ENCODE measurements at regions of chr7 and their contacts with region 1.

Region 1: DNA sequence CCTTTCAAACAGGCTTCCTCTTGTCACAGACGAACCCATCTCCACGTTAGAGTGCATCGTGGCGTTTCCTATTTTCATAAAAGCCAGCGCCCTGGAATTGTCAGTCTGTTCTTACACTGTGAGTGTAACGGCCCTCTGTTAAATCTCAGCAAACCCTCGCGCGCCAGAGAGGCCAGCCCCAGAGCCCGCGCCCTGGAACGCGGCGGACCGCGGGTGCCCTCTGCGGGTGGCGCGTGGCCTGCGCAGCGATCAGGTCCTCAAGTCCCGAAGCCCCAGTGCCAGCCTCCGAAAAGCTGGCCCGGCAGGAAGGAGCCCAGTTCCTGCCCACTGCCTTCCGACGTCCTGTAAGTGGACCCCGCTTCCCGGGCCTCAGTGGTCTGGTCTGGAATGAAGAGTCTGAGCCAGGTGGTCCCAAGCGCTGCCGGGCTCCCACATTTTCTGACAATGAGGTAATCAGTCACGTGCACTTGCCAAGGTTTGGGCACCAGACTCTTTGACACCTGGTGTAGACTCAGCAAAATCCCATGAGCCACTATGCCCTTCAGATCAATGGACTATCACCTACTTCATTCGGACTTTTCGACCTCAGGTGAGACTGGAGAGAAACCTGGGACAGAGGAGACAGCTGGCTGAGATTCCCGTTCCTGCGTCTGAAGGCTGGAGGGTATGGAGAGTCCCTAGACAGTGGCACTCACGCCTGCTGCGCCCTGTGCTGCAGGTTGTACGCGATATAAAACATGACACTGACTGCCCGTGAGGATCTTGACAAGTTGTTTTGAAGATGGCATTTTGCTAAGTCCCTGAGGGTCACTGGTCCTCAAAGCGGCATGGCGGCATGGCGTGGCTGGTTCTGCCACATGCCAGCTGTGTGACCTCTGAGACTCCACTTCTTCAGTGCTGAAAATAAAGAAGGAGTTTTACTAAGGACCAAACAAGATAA is 109.4 kb upstream of the LANCL2 start:
- DNase-seq: peak; percentile 20
- ATAC-seq: peak; percentile 96
- H3K4me3 ChIP-seq: peak overlapping the region; percentile 67; the same call in 1 of the 2 replicates
- H3K27ac ChIP-seq: no peak overlapping the region
- H3K4me1 ChIP-seq: peaks cover 4% of the 10 kb centered on the region; the same call in 1 of the 2 replicates
- H3K27me3 ChIP-seq: peaks cover 0 to 6% of the 10 kb centered on the region in 2 experiments; a peak in 3 of 4 replicates
- CTCF ChIP-seq: peak; percentile 88 to 92 (median 89)
- EP300 ChIP-seq: no peak
- POLR2A ChIP-seq: no peak
- RAD21 ChIP-seq: peak; percentile 86

Region 2: DNA sequence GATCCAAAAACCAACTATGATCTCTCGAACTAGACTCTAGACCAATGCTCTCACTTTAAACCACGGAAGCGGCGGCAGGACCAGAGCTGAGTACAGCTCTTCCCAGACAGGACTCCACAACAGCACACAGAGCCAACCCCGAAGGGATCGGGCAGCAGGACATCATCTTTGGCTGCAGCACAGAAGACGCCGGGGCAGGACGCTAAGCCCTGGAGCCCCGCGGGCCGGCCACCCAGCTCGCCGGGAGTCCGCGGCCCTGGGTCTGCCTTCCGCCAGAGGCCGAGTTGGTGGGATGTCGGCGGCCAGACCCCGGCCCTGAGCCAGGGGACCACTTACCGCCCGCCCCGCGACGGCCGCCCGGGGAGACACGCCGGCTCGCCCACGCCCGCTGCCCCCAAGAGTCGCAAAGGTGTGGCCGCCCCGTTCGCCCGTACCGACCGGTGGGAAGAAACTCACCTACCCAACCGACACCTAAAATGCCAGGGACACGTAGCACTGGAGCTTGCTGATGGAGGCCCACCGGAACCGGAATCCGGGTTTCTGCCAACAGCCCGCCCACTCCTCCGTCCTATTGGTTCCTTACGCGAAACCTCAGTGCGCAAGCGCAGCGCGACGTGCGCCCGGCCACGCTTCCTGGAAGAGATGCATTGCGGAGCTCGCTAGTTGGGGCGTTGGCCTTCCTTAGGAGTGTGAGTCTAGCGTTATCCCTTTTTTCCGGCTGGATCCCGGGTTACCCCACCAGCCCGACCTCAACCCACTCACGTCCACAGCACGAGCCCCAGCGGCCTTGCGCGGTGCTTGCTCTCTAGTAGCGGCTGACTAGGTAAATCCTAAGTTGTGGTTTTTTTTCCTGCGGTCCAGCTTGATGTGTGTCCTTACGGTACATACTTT is 496.8 kb before region 1 on chr7 and contains the start of gene SEC61G:
- CTCF ChIA-PET with region 1: interaction called, 19 read pairs
- POLR2A ChIA-PET with region 1: no interaction called
- RAD21 ChIA-PET with region 1: interaction called, 6 read pairs
- SMC1A ChIA-PET with region 1: interaction called, 9 read pairs
- in situ Hi-C with region 1: no loop called
- intact Hi-C with region 1: no loop called
- DNase-seq: peak; percentile 90
- ATAC-seq: peak; percentile 96
- H3K4me3 ChIP-seq: peak within 1 kb of the TSS; percentile 97
- H3K27ac ChIP-seq: peak within 1 kb of the TSS; percentile 78
- H3K4me1 ChIP-seq: no peaks in the 10 kb centered on the region
- H3K27me3 ChIP-seq: no peaks in the 10 kb centered on the region
- CTCF ChIP-seq: no peak
- EP300 ChIP-seq: no peak
- POLR2A ChIP-seq: peak; percentile 92
- RAD21 ChIP-seq: no peak
- polyA plus RNA-seq, gene SEC61G: 709 to 809 TPM

Region 3: GRCh38 chr7:54788664-54789063 is 467.1 kb before region 1 on chr7:
- CTCF ChIA-PET with region 1: interaction called, 82 read pairs
- POLR2A ChIA-PET with region 1: no interaction called
- RAD21 ChIA-PET with region 1: interaction called, 75 read pairs
- SMC1A ChIA-PET with region 1: interaction called, 41 read pairs
- in situ Hi-C with region 1: no loop called
- intact Hi-C with region 1: loop called (anchors 1 kb)
- DNase-seq: peak; percentile 13
- ATAC-seq: peak; percentile 85
- H3K4me3 ChIP-seq: no peak overlapping the region
- H3K27ac ChIP-seq: no peak overlapping the region
- H3K4me1 ChIP-seq: no peaks in the 10 kb centered on the region
- H3K27me3 ChIP-seq: peaks cover 0 to 3% of the 10 kb centered on the region in 2 experiments; a peak in 1 of 4 replicates
- CTCF ChIP-seq: peak; percentile 47 to 61 (median 55); a peak in 5 of 6 replicates
- EP300 ChIP-seq: no peak
- POLR2A ChIP-seq: no peak
- RAD21 ChIP-seq: peak; percentile 91

Region 4: DNA sequence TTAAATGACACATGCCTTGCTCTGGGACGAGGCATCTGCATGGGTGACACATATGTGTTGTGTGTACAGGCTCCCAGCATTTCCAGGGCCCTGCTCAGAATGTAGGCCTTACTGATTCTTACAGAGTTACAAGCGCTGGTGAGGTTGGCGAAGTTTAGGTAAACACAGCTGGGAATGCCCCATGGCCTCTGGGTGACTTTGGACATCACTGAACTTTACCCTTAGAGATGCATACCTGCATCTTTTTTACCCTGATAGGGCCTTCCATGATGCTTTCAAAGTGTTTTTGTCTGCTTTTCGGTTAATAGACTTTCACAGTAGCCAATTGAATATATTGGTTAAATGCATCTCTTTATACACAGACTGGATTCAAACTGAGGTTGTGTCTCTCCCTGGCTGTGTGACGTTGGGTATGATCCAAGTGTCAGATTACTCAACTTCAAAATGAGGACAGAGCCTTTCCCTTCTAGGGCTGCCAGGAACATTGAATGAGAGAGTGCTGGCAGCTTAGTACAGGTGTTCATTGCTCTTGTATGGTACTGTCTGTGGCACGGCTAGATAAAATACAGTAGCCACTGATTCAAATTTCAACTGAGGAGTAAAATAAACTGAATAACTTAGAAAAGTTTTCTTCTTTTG is 207.4 kb before region 1 on chr7:
- CTCF ChIA-PET with region 1: interaction called, 9 read pairs
- POLR2A ChIA-PET with region 1: no interaction called
- RAD21 ChIA-PET with region 1: interaction called, 28 read pairs
- SMC1A ChIA-PET with region 1: interaction called, 15 read pairs
- in situ Hi-C with region 1: no loop called
- intact Hi-C with region 1: loop called (anchors 1 kb)
- DNase-seq: no peak
- ATAC-seq: no peak
- H3K4me3 ChIP-seq: no peak overlapping the region
- H3K27ac ChIP-seq: no peak overlapping the region
- H3K4me1 ChIP-seq: no peaks in the 10 kb centered on the region
- H3K27me3 ChIP-seq: no peaks in the 10 kb centered on the region
- CTCF ChIP-seq: no peak
- EP300 ChIP-seq: no peak
- POLR2A ChIP-seq: no peak
- RAD21 ChIP-seq: no peak

Region 5: GRCh38 chr7:55073945-55074499 is 181.7 kb before region 1 on chr7:
- CTCF ChIA-PET with region 1: interaction called, 5 read pairs
- POLR2A ChIA-PET with region 1: no interaction called
- RAD21 ChIA-PET with region 1: no interaction called
- SMC1A ChIA-PET with region 1: interaction called, 4 read pairs
- in situ Hi-C with region 1: no loop called
- intact Hi-C with region 1: loop called (anchors 10 kb)
- DNase-seq: peak; percentile 91
- ATAC-seq: peak; percentile 94
- H3K4me3 ChIP-seq: no peak overlapping the region
- H3K27ac ChIP-seq: peak overlapping the region; percentile 77
- H3K4me1 ChIP-seq: peaks cover 24% of the 10 kb centered on the region
- H3K27me3 ChIP-seq: no peaks in the 10 kb centered on the region
- CTCF ChIP-seq: no peak
- EP300 ChIP-seq: peak in 1 of 2 experiments; percentile 54; a peak in 1 of 4 replicates
- POLR2A ChIP-seq: peak; percentile 64
- RAD21 ChIP-seq: no peak

Region 6: GRCh38 chr7:55245271-55245723 is 10.5 kb before region 1 on chr7:
- CTCF ChIA-PET with region 1: interaction called, 13 read pairs
- POLR2A ChIA-PET with region 1: no interaction called
- RAD21 ChIA-PET with region 1: interaction called, 4 read pairs
- SMC1A ChIA-PET with region 1: interaction called, 3 read pairs
- in situ Hi-C with region 1: no loop called
- intact Hi-C with region 1: no loop called
- DNase-seq: no peak
- ATAC-seq: no peak
- H3K4me3 ChIP-seq: no peak overlapping the region
- H3K27ac ChIP-seq: no peak overlapping the region
- H3K4me1 ChIP-seq: no peaks in the 10 kb centered on the region
- H3K27me3 ChIP-seq: peaks cover 0 to 3% of the 10 kb centered on the region in 2 experiments; a peak in 2 of 4 replicates
- CTCF ChIP-seq: no peak
- EP300 ChIP-seq: no peak
- POLR2A ChIP-seq: no peak
- RAD21 ChIP-seq: no peak

Measured in GM12878 (cell line).